ENCODE measurements at regions of chr12 and their contacts with region 1.

Region 1: DNA sequence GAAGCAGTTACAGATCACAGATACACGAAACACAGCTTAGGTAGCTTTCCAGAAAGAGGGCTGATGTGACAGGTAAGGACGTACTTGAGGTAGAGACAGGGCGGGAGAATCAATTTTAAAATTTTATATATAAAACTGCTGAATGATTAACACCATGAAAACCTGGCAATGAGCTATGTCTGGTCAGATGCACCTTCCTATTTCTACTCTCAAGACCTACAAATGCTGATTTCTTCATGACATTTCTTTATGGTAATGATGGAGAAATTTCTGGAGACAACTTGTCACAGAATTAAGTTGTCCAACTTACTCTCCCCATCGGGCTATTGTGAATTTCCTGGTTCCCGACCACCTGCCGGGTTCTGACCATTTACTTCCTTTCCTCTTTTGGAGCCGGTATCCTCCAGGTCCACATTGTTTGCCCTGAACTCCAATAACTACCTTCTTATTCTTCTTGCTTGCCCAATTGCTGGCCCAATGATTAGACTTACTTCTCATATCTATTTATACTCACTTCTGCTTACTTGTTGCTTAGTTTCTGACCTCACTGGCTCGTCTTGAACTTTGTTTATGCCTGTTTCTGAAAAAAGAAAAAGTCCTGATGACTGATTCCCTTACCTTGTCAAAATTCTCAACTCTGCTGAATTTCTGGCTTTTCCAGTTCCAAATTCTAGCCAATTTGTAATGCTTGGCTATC is 12.8 kb upstream of the ATP2B1 start:
- DNase-seq: peak; percentile 34
- ATAC-seq: peak; percentile 97
- H3K4me3 ChIP-seq: peak overlapping the region; percentile 34
- H3K27ac ChIP-seq: peak overlapping the region; percentile 56
- H3K4me1 ChIP-seq: peaks cover 8% of the 10 kb centered on the region; the same call in 1 of the 2 replicates
- H3K27me3 ChIP-seq: no peaks in the 10 kb centered on the region
- CTCF ChIP-seq: no peak
- EP300 ChIP-seq: peak in 1 of 2 experiments; percentile 61; a peak in 2 of 4 replicates
- POLR2A ChIP-seq: no peak
- RAD21 ChIP-seq: no peak

Region 2: DNA sequence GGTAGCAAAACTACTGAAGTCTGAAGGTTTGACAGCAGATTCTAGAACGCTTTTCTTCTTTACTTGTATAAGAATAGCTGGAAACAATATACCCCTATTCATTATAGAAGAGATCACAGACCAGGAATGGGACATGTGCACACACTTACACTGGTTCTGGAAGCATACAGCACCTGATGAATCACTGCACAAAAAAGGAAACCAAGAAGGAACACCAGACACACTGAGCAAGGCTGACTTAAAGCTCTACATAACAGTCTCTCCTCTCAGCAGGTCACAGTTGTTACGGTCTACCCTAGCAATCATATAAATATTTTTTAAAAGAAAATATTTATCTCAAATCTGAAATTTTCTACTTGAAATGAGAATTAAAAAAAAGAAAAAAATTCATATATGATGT is 26.3 kb before region 1 on chr12:
- CTCF ChIA-PET with region 1: no interaction called
- POLR2A ChIA-PET with region 1: interaction called, 10 read pairs
- RAD21 ChIA-PET with region 1: no interaction called
- SMC1A ChIA-PET with region 1: interaction called, 5 read pairs
- in situ Hi-C with region 1: no loop called
- intact Hi-C with region 1: no loop called
- DNase-seq: no peak
- ATAC-seq: peak; percentile 18
- H3K4me3 ChIP-seq: no peak overlapping the region
- H3K27ac ChIP-seq: no peak overlapping the region
- H3K4me1 ChIP-seq: peaks cover 9% of the 10 kb centered on the region
- H3K27me3 ChIP-seq: no peaks in the 10 kb centered on the region
- CTCF ChIP-seq: no peak
- EP300 ChIP-seq: no peak
- POLR2A ChIP-seq: no peak
- RAD21 ChIP-seq: no peak

Region 3: DNA sequence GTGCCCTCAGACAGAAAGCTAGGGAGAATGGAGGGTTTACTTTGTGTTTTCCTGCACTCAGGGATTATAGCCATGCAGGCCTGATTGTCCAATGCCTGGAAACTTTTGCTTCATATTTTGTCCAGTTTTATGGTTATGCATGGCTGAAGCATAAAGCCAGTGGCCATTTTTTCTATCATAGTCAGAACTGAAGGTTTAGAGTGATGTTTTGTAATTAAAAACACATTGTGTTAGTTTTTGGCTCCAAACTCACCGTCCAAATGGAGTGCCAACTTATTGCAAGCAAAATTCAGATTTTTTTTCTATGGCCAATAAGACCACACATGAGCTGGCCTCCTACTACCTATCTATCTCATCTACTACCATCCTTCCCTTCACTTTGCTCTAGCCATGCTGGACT is 27.4 kb after region 1 on chr12:
- CTCF ChIA-PET with region 1: interaction called, 3 read pairs
- POLR2A ChIA-PET with region 1: interaction called, 3 read pairs
- RAD21 ChIA-PET with region 1: no interaction called
- SMC1A ChIA-PET with region 1: interaction called, 12 read pairs
- in situ Hi-C with region 1: loop called (anchors 5 kb)
- intact Hi-C with region 1: no loop called
- DNase-seq: no peak
- ATAC-seq: no peak
- H3K4me3 ChIP-seq: no peak overlapping the region
- H3K27ac ChIP-seq: no peak overlapping the region
- H3K4me1 ChIP-seq: peaks cover 11% of the 10 kb centered on the region
- H3K27me3 ChIP-seq: no peaks in the 10 kb centered on the region
- CTCF ChIP-seq: no peak
- EP300 ChIP-seq: no peak
- POLR2A ChIP-seq: no peak
- RAD21 ChIP-seq: no peak

Measured in GM12878 (cell line).